ENCODE measurements at regions of chr12 and their contacts with region 1.

Region 1: GRCh38 chr12:124036674-124037109 is 63.7 kb downstream of the ZNF664 start:
- DNase-seq: peak; percentile 27
- ATAC-seq: peak; percentile 80
- H3K4me3 ChIP-seq: no peak overlapping the region
- H3K27ac ChIP-seq: no peak overlapping the region
- H3K4me1 ChIP-seq: no peaks in the 10 kb centered on the region
- H3K27me3 ChIP-seq: no peaks in the 10 kb centered on the region
- CTCF ChIP-seq: peak; percentile 80 to 89 (median 84)
- EP300 ChIP-seq: no peak
- POLR2A ChIP-seq: no peak
- RAD21 ChIP-seq: peak; percentile 92

Region 2: GRCh38 chr12:123905319-123905925 is 131.3 kb before region 1 on chr12:
- CTCF ChIA-PET with region 1: interaction called, 21 read pairs
- POLR2A ChIA-PET with region 1: no interaction called
- RAD21 ChIA-PET with region 1: interaction called, 7 read pairs
- SMC1A ChIA-PET with region 1: interaction called, 6 read pairs
- in situ Hi-C with region 1: no loop called
- intact Hi-C with region 1: loop called (anchors 2 kb)
- DNase-seq: peak; percentile 9
- ATAC-seq: peak; percentile 76
- H3K4me3 ChIP-seq: no peak overlapping the region
- H3K27ac ChIP-seq: no peak overlapping the region
- H3K4me1 ChIP-seq: no peaks in the 10 kb centered on the region
- H3K27me3 ChIP-seq: no peaks in the 10 kb centered on the region; a peak in 1 of 4 replicates
- CTCF ChIP-seq: peak; percentile 72 to 77 (median 74)
- EP300 ChIP-seq: no peak
- POLR2A ChIP-seq: no peak
- RAD21 ChIP-seq: peak; percentile 62

Region 3: GRCh38 chr12:123995023-123995748 is 41.5 kb before region 1 on chr12:
- CTCF ChIA-PET with region 1: interaction called, 13 read pairs
- POLR2A ChIA-PET with region 1: no interaction called
- RAD21 ChIA-PET with region 1: no interaction called
- SMC1A ChIA-PET with region 1: no interaction called
- in situ Hi-C with region 1: no loop called
- intact Hi-C with region 1: no loop called
- DNase-seq: no peak
- ATAC-seq: no peak; the same call in 2 of the 3 replicates
- H3K4me3 ChIP-seq: no peak overlapping the region
- H3K27ac ChIP-seq: no peak overlapping the region
- H3K4me1 ChIP-seq: no peaks in the 10 kb centered on the region
- H3K27me3 ChIP-seq: no peaks in the 10 kb centered on the region
- CTCF ChIP-seq: no peak
- EP300 ChIP-seq: no peak
- POLR2A ChIP-seq: no peak
- RAD21 ChIP-seq: no peak

Region 4: GRCh38 chr12:124020514-124020949 is 16.2 kb before region 1 on chr12:
- CTCF ChIA-PET with region 1: interaction called, 13 read pairs
- POLR2A ChIA-PET with region 1: no interaction called
- RAD21 ChIA-PET with region 1: no interaction called
- SMC1A ChIA-PET with region 1: interaction called, 5 read pairs
- in situ Hi-C with region 1: no loop called
- intact Hi-C with region 1: no loop called
- DNase-seq: no peak
- ATAC-seq: no peak
- H3K4me3 ChIP-seq: no peak overlapping the region
- H3K27ac ChIP-seq: no peak overlapping the region
- H3K4me1 ChIP-seq: no peaks in the 10 kb centered on the region
- H3K27me3 ChIP-seq: no peaks in the 10 kb centered on the region
- CTCF ChIP-seq: no peak
- EP300 ChIP-seq: no peak
- POLR2A ChIP-seq: no peak
- RAD21 ChIP-seq: no peak

Region 5: DNA sequence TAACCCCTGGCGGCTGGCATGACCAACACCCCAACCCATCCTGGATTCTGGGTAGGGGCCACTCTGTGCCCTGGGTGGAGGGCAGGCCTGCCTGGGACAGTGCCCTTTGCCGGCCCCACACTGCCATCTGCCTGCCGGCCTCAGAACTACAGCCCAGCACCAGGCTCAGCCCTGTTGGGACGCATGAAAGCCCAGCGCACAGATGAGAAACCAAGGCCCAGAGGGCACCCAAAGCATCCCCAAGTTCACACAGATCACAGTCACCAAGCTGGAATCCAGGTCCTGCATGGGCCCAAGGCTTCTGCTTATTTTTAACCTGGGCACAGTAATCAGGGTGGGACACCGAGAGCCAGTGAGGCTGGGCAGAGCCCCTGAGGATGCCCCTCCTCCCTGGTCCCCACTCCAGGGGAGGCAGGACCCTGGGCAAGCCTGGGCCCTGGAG is 284.4 kb after region 1 on chr12:
- CTCF ChIA-PET with region 1: interaction called, 39 read pairs
- POLR2A ChIA-PET with region 1: no interaction called
- RAD21 ChIA-PET with region 1: interaction called, 7 read pairs
- SMC1A ChIA-PET with region 1: interaction called, 5 read pairs
- in situ Hi-C with region 1: loop called (anchors 5 kb)
- intact Hi-C with region 1: loop called (anchors 1 kb)
- DNase-seq: peak; percentile 24
- ATAC-seq: peak; percentile 93
- H3K4me3 ChIP-seq: no peak overlapping the region
- H3K27ac ChIP-seq: no peak overlapping the region
- H3K4me1 ChIP-seq: no peaks in the 10 kb centered on the region
- H3K27me3 ChIP-seq: no peaks in the 10 kb centered on the region
- CTCF ChIP-seq: peak; percentile 91 to 97 (median 93); a peak in 5 of 6 replicates
- EP300 ChIP-seq: no peak
- POLR2A ChIP-seq: 0 out of 2 replicates have a peak, but pooled peaks have one; percentile 42
- RAD21 ChIP-seq: peak; percentile 88

Region 6: GRCh38 chr12:124388679-124389536 is 352.2 kb after region 1 on chr12:
- CTCF ChIA-PET with region 1: interaction called, 3 read pairs
- POLR2A ChIA-PET with region 1: no interaction called
- RAD21 ChIA-PET with region 1: no interaction called
- SMC1A ChIA-PET with region 1: no interaction called
- in situ Hi-C with region 1: no loop called
- intact Hi-C with region 1: loop called (anchors 10 kb)
- DNase-seq: no peak
- ATAC-seq: peak; percentile 48
- H3K4me3 ChIP-seq: no peak overlapping the region
- H3K27ac ChIP-seq: no peak overlapping the region
- H3K4me1 ChIP-seq: peaks cover 40% of the 10 kb centered on the region
- H3K27me3 ChIP-seq: no peaks in the 10 kb centered on the region
- CTCF ChIP-seq: no peak
- EP300 ChIP-seq: no peak
- POLR2A ChIP-seq: no peak; the same call in 1 of the 2 replicates
- RAD21 ChIP-seq: no peak

Measured in GM12878 (cell line).